ENCODE measurements at regions of chr7 and their contacts with region 1.

Region 1: DNA sequence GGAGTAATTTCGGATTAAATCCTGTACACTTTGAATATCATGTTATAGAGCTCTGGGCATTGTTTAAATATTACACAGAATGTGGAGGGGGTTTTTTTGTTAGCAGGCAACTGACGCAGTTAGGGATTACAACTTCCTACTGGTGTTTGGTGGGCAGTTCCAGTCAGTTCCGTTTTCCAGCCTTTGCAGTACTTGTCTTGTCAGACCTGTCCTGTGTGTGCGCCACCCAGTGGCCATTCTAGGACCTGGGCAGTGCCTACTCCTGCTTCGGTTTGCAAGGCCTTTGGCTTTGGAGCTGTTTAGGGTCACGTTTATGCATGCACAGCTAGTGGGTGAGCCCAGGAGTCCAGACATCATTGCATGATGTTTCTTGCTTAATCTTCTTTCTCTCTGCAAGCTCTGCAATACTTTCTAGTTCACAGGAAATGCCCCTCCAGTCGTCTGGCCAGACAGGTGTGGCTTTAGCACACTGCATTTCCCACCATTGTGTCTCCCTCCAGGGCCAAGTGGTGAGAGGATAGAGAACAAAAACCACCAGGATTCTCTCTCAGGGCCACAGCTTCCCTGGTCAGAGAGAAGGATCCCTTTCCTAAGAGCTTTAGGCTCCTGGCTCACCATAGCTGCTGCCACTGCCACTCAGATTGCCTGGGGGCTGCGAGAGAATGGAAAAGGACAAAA is 96.5 kb upstream of the TARP start:
- DNase-seq: peak; percentile 85 to 87
- ATAC-seq: peak; percentile 89 to 96 (median 94)
- H3K4me3 ChIP-seq: peak overlapping the region in 3 of 10 donors; percentile 10 to 27 (median 22)
- H3K27ac ChIP-seq: peak overlapping the region in 7 of 10 donors; percentile 13 to 66 (median 26)
- H3K4me1 ChIP-seq: peaks cover 0 to 38% (median 7%) of the 10 kb centered on the region in 9 donors
- H3K27me3 ChIP-seq: no peaks in the 10 kb centered on the region
- CTCF ChIP-seq: peak; percentile 48 to 89 (median 81)

Region 2: DNA sequence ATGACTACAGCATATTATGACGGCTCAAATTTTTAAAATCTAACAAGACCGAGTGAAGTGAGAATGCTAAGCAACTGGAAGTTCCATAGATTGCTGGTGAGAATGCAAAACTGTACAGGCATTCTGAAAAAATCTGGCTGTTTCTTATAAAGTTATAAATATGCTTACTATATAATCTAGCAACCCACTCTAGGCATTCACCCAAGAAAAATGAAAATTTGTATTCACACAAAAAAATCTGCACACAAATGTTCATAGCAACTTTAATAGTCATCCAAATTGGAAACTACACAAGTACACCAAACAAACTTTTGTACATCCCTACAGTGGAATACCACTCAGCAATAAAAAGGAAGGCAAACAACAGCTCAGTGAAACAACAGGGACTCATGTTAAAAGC is 231.8 kb before region 1 on chr7:
- intact Hi-C with region 1: loop called in 1 of 10 experiments (anchors 10 kb)
- DNase-seq: no peak
- ATAC-seq: no peak
- H3K4me3 ChIP-seq: no peak overlapping the region
- H3K27ac ChIP-seq: no peak overlapping the region
- H3K4me1 ChIP-seq: no peaks in the 10 kb centered on the region
- H3K27me3 ChIP-seq: no peaks in the 10 kb centered on the region
- CTCF ChIP-seq: no peak

Region 3: DNA sequence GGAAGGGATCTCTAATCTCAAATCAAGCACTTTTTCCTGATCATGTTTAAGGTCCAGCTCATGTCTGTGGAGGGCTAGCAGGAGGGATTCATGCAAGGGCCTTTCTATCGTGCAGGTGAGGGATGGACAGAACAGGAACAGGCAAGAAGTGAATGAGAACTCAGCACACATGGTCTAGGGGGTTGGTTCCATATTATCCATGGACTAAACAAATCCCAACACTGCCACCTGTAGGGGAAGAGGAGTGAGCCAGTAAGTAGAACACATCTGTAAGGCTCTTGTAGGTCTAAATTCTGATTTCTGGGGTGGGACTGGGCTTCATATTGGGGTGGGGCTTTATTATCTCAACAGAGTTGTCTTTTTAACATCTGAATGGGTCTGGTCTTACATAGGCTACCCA is 41.4 kb after region 1 on chr7:
- intact Hi-C with region 1: no loop called
- DNase-seq: no peak
- ATAC-seq: no peak
- H3K4me3 ChIP-seq: no peak overlapping the region
- H3K27ac ChIP-seq: no peak overlapping the region
- H3K4me1 ChIP-seq: no peaks in the 10 kb centered on the region
- H3K27me3 ChIP-seq: no peaks in the 10 kb centered on the region
- CTCF ChIP-seq: peak in 1 of 9 donors; percentile 33

Measured in heart right ventricle (tissue), 16 donors.